Activated CD4-positive, alpha-beta T cell treated with anti-CD3 and anti-CD28 coated beads for 36 hours (primary cell): ENCODE measurements at regions of chr11 and their contacts with region 1.

Region 1: GRCh38 chr11:59475176-59475575 is 2.1 kb downstream of the OR4D10 start:
- DNase-seq: no peak
- ATAC-seq: no peak
- H3K4me3 Mint-ChIP-seq: no peak overlapping the region
- H3K27ac Mint-ChIP-seq: no peak overlapping the region
- H3K4me1 Mint-ChIP-seq: no peaks in the 10 kb centered on the region
- H3K27me3 Mint-ChIP-seq: peaks cover 8% of the 10 kb centered on the region

Region 2: GRCh38 chr11:59534676-59535075 is 59.5 kb after region 1 on chr11:
- CTCF ChIA-PET with region 1: no interaction called
- POLR2A ChIA-PET with region 1: no interaction called
- intact Hi-C with region 1: loop called in 1 of 2 experiments (anchors 10 kb)
- DNase-seq: no peak
- ATAC-seq: no peak
- H3K4me3 Mint-ChIP-seq: no peak overlapping the region
- H3K27ac Mint-ChIP-seq: no peak overlapping the region
- H3K4me1 Mint-ChIP-seq: peaks cover 13% of the 10 kb centered on the region
- H3K27me3 Mint-ChIP-seq: no peaks in the 10 kb centered on the region